Transverse colon (tissue), 4 donors: ENCODE measurements at regions of chr19 and their contacts with region 1.

Region 1: DNA sequence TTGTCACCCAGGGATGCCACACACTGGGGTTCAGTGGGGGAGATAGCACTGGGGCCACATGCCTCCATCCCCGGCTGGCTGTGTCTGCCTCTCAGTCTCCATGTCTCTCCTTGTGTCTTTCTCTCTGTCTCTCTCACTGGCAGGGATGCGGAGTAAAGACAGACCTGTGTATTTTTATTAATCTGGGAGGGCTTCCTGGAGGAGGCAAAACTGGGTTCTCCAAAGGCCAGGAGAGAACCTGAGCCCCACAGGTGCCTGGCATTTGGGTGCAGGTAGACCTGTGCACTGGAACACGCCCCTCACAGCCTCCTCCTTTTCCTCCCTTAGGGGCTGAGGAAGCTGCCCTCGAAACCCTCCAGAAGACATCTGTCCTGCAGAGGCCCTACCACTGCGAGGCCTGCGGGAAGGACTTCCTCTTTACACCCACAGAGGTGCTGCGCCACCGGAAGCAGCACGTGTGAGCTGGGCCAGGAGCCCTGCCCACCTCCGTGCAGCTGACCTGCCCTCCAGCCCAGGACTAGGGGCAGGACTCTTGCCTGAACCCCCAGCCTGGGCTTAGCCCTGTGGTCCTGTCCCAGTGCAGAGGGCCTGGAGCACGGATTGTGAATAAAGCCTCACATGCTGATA is 32.7 kb downstream of the DHX34 start:
- DNase-seq: peak; percentile 25
- H3K4me3 ChIP-seq: no peak overlapping the region
- H3K27ac ChIP-seq: no peak overlapping the region
- H3K4me1 ChIP-seq: no peaks in the 10 kb centered on the region
- H3K27me3 ChIP-seq: peaks cover 4% of the 10 kb centered on the region
- CTCF ChIP-seq: no peak
- EP300 ChIP-seq: no peak
- POLR2A ChIP-seq: no peak

Region 2: DNA sequence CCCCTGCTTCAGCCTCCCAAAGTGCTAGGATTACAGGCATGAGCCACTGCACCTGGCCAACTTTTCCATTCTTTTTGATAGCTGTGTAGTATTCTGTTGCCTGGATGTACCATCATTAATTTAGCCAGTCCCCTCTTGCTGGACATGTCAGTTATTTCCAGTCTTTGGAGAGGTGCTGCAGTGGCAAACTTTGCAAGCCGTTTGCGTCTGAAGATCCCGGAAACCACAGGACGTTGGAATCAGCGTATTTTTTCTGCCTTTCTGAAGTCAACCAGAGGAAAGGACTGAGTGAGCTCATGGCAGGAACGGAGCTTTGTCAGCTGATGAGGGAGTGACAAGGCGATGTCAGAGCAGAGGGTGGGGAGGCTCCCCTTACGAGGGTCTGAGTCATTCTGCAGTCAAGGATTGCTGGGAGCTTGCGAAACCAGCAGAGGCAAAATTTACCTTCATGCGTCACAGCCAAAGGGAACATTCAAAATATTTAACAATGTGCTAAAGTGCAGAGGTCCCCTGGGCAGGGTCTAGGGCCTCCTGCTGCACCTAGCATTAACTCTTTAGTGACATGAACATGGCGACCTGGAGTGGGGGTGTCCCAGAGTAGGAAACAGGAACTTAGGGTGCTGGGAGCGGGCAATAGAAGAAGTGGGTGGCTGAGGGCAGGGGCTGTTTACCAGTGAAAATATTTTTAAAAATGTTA is 66.5 kb before region 1 on chr19:
- in situ Hi-C with region 1: no loop called
- intact Hi-C with region 1: loop called (anchors 10 kb)
- DNase-seq: peak; percentile 44
- H3K4me3 ChIP-seq: no peak overlapping the region
- H3K27ac ChIP-seq: peak overlapping the region; percentile 13 to 35 (median 20)
- H3K4me1 ChIP-seq: no peaks in the 10 kb centered on the region
- H3K27me3 ChIP-seq: peaks cover 13% of the 10 kb centered on the region
- CTCF ChIP-seq: no peak
- EP300 ChIP-seq: peak; percentile 61
- POLR2A ChIP-seq: no peak

Region 3: GRCh38 chr19:47514869-47515588 is 133.3 kb after region 1 on chr19 and contains the start of gene NAPA:
- in situ Hi-C with region 1: no loop called
- intact Hi-C with region 1: no loop called
- DNase-seq: peak; percentile 100
- H3K4me3 ChIP-seq: peak within 1 kb of the TSS; percentile 82 to 98 (median 92)
- H3K27ac ChIP-seq: peak within 1 kb of the TSS; percentile 95 to 99 (median 98)
- H3K4me1 ChIP-seq: peaks cover 33 to 46% (median 38%) of the 10 kb centered on the region in 4 donors
- H3K27me3 ChIP-seq: no peaks in the 10 kb centered on the region
- CTCF ChIP-seq: no peak
- EP300 ChIP-seq: no peak
- POLR2A ChIP-seq: peak; percentile 99
- total RNA-seq, gene NAPA: 94.8 to 138 (median 114) TPM